ENCODE measurements at regions of chr5 and their contacts with region 1.

Region 1: DNA sequence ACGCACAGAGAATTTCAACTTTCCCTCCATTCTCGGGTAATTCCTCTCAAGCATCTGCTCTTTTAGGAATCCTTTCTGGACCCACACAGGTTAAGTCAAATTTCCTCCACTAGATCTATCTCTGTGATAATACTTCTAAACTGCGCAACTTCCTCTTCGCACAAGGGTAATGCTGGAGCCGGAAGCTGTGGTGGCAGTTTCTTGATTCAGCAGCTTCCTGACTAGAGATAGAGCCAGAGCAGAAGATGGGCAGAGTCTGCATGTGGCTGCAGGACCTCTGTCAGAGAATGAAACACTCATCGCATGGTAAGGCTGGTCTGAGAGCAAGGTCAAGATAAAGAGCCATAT is 11.1 kb upstream of the CDC42SE2 start:
- DNase-seq: peak; percentile 90
- H3K4me3 Mint-ChIP-seq: peak overlapping the region; percentile 87
- H3K27ac Mint-ChIP-seq: peak overlapping the region; percentile 96
- H3K4me1 Mint-ChIP-seq: peaks cover 56% of the 10 kb centered on the region
- H3K27me3 Mint-ChIP-seq: no peaks in the 10 kb centered on the region

Region 2: GRCh38 chr5:130720355-130720754 is 532.4 kb before region 1 on chr5:
- CTCF ChIA-PET with region 1: no interaction called
- POLR2A ChIA-PET with region 1: no interaction called
- intact Hi-C with region 1: no loop called
- DNase-seq: no peak
- H3K4me3 Mint-ChIP-seq: no peak overlapping the region
- H3K27ac Mint-ChIP-seq: no peak overlapping the region
- H3K4me1 Mint-ChIP-seq: no peaks in the 10 kb centered on the region
- H3K27me3 Mint-ChIP-seq: peaks cover 16% of the 10 kb centered on the region

Region 3: DNA sequence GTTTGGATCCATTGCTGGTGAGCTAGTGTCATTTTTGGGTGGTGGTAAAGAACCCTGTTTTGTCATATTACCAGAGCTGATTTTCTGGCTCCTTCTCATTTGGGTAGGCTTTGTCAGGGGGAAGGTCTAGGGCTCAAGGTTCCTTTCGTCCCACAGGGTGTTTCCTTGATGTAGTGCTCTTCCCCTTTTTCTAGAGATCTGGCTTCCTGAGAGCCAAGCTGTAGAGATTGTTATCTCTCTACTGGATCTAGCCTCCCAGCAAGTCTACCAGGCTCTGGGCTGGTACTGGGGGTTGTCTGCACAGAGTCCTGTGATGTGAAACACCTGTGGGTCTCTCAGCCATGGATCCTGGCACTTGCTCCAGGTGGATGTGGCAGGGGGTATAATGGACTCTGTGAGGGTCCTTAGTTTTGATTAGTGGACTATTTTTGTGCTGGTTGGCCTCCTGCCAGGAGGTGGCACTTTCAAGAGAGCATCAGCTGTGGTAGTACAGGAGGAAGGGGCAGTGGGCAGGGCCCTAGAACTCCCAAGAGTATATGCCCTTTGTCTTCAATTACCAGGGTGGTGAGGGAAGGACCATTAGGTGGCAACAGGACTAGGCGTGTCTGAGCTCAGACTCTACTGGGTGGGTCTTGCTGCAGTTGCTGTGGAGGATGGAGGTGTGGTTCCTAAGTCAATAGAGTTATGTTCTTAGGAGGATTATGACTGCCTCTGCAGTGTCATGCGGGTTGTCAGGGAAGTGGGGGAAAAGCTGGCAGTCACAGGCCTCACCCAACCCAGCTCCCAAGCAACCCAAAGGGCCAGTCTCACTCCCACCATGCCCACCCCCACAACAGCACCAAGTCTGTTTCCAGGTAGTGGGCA is 233.5 kb before region 1 on chr5:
- CTCF ChIA-PET with region 1: no interaction called
- POLR2A ChIA-PET with region 1: no interaction called
- intact Hi-C with region 1: no loop called
- DNase-seq: no peak
- H3K4me3 Mint-ChIP-seq: no peak overlapping the region
- H3K27ac Mint-ChIP-seq: no peak overlapping the region
- H3K4me1 Mint-ChIP-seq: peaks cover 13% of the 10 kb centered on the region
- H3K27me3 Mint-ChIP-seq: no peaks in the 10 kb centered on the region

Region 4: DNA sequence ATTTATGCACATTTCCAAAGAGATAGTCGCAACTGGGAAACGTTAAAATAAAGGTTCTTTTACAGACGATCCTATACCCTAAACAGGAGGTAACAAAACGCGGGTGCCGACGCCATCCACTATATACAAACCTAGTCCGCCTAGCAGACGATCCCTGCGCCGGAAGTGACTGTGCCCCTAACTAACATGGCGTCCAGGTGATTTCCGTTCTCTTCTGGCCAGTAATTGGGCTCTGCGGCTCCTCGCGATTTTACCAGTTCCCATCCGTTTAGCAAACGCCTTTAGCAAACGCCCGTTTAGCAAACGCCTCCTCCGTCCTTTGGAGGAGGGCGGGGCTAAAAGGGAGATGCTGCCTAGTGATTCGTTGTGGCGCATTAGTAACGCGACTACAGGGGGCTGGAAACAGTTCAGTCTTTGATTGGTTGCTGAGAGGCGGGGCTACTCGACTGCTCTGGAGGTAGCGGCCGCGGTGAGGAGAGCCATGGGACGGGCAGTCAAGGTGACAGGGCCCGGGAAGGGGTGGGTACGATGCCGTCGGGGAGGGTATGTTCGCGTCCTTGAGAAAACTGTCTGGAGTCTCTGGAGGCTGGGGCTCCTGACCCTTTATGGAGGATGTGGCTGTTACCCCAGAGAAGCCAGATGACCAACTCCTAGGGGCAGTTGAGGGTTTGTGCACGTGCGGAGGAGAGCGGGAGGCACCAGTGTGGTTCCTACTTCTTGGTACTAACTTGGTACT is 82.1 kb before region 1 on chr5 and contains the start of gene LYRM7:
- CTCF ChIA-PET with region 1: interaction called, 3 read pairs
- POLR2A ChIA-PET with region 1: interaction called, 6 read pairs
- intact Hi-C with region 1: loop called (anchors 1 kb)
- DNase-seq: peak; percentile 98
- H3K4me3 Mint-ChIP-seq: peak within 1 kb of the TSS; percentile 97
- H3K27ac Mint-ChIP-seq: peak within 1 kb of the TSS; percentile 92
- H3K4me1 Mint-ChIP-seq: peaks cover 37% of the 10 kb centered on the region
- H3K27me3 Mint-ChIP-seq: no peaks in the 10 kb centered on the region
- total RNA-seq, gene LYRM7: 16.6 to 18.6 TPM

Region 5: DNA sequence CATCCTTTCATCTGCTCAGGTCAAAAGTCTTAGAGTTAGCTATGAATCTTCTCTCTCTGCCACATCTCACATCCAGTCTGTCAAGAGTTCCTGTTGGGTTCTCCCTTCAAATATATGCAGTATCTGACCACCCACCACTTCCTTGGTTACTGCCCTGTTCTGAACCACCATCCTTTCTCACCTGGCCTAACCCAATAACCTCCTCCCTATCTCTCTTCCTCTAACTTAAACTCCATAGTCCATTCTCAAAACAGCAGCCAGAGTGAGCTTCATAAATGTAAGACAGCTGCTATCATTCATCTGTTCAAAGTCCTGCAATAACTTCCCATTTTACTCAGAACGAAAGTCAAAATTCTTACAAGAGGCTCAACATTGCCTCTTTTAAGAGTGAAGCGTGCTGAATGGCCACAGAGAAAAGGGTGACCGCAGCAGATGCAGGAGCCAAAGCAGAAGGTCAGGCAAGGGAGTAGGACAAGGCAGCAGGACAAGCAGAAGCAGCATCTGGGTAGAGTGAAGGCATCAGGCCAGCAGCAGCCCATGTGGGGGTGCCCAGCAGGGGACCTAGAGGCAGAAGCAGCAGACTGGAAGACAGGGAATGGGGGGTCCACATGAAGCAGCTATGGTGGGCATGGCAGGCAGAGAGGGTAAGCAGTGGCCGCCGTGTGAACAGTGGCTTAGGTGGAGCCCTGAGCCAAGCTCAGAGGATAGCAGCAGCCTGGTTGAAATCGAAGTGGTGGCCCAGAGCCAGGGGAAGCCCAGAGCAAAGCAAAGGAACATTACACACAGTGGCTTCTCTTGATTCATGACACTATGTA is 28.2 kb before region 1 on chr5:
- CTCF ChIA-PET with region 1: interaction called, 3 read pairs
- POLR2A ChIA-PET with region 1: interaction called, 4 read pairs
- intact Hi-C with region 1: loop called (anchors 1 kb)
- DNase-seq: peak; percentile 34
- H3K4me3 Mint-ChIP-seq: no peak overlapping the region
- H3K27ac Mint-ChIP-seq: no peak overlapping the region
- H3K4me1 Mint-ChIP-seq: peaks cover 12% of the 10 kb centered on the region
- H3K27me3 Mint-ChIP-seq: no peaks in the 10 kb centered on the region

Region 6: DNA sequence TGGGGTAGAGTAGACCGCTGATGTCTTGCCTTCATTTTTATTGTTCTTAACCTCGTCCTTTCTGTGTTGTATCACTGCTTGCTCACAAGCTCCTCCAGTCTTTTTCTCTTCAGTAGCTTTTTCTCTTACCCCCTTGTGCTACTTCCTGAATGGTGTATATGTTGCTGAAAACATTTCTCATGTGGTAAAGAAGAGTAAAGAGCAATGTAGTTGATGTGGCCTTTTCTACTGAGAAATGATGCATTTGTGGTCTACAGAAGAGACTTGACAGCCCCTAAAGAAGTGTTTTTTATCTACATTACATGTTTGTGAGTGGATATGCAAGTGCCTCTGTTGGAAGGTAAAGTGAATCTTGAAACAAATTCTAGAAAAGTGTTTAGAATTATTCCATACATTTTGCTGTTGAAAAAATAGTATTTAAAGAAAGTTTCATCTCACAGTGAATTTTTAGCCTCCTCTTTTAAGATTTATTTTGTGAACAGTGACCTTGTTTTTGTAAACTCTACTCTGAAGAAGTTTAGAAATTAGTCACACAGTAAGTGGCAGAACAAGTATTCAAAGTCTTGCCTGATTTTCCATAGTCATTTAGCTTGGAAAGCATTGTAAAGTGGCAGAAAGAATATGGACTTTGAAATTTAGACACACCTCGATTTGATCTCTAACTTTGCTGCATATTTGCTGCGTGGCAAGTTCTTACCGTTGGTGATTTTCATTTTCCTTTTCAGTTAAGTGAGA is 28.5 kb after region 1 on chr5:
- CTCF ChIA-PET with region 1: no interaction called
- POLR2A ChIA-PET with region 1: interaction called, 3 read pairs
- intact Hi-C with region 1: loop called (anchors 1 kb)
- DNase-seq: no peak
- H3K4me3 Mint-ChIP-seq: peak overlapping the region; percentile 68
- H3K27ac Mint-ChIP-seq: peak overlapping the region; percentile 98
- H3K4me1 Mint-ChIP-seq: peaks cover 86% of the 10 kb centered on the region
- H3K27me3 Mint-ChIP-seq: no peaks in the 10 kb centered on the region

Region 7: GRCh38 chr5:131394128-131394527 is 141.3 kb after region 1 on chr5:
- CTCF ChIA-PET with region 1: interaction called, 3 read pairs
- POLR2A ChIA-PET with region 1: interaction called, 7 read pairs
- intact Hi-C with region 1: loop called (anchors 1 kb)
- DNase-seq: peak; percentile 69
- H3K4me3 Mint-ChIP-seq: peak overlapping the region; percentile 66
- H3K27ac Mint-ChIP-seq: peak overlapping the region; percentile 93
- H3K4me1 Mint-ChIP-seq: peaks cover 86% of the 10 kb centered on the region
- H3K27me3 Mint-ChIP-seq: no peaks in the 10 kb centered on the region

Region 8: GRCh38 chr5:131475541-131475941 is 222.7 kb after region 1 on chr5:
- CTCF ChIA-PET with region 1: no interaction called
- POLR2A ChIA-PET with region 1: no interaction called
- intact Hi-C with region 1: no loop called
- DNase-seq: no peak
- H3K4me3 Mint-ChIP-seq: no peak overlapping the region
- H3K27ac Mint-ChIP-seq: no peak overlapping the region
- H3K4me1 Mint-ChIP-seq: peaks cover 16% of the 10 kb centered on the region
- H3K27me3 Mint-ChIP-seq: no peaks in the 10 kb centered on the region